Activated CD4-positive, alpha-beta memory T cell treated with anti-CD3 and anti-CD28 coated beads, Interleukin-2, amount 10 ng/mL, durations not matched to agents 7 days and 5 days (primary cell): ENCODE measurements at regions of chr2 and their contacts with region 1.

Region 1: DNA sequence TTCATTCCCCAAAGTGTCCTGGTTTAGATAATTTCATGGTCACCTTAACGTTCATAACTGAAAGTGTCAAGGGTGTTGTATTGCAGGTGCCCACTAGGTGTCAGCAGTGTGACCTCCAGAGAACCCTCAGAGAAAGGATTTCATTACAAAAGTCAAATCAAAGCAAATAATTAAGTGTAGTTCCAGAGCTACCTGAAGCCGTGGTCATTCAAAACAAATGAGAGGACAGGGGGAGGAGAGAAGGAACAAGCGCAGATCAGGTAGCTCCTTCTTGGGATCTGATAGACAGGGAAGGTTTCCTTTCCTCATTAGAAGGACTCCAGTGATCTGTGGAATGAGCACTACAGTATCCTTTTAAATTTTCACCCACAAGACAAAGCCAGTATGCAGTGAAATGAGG is at the start of gene SLC9A4:
- DNase-seq: peak; percentile 55
- H3K4me3 Mint-ChIP-seq: no peak within 1 kb of the TSS
- H3K27ac Mint-ChIP-seq: no peak within 1 kb of the TSS
- H3K4me1 Mint-ChIP-seq: peaks cover 2% of the 10 kb centered on the region
- H3K27me3 Mint-ChIP-seq: peaks cover 39% of the 10 kb centered on the region
- total RNA-seq, gene SLC9A4: 0.10 to 0.15 TPM

Region 2: DNA sequence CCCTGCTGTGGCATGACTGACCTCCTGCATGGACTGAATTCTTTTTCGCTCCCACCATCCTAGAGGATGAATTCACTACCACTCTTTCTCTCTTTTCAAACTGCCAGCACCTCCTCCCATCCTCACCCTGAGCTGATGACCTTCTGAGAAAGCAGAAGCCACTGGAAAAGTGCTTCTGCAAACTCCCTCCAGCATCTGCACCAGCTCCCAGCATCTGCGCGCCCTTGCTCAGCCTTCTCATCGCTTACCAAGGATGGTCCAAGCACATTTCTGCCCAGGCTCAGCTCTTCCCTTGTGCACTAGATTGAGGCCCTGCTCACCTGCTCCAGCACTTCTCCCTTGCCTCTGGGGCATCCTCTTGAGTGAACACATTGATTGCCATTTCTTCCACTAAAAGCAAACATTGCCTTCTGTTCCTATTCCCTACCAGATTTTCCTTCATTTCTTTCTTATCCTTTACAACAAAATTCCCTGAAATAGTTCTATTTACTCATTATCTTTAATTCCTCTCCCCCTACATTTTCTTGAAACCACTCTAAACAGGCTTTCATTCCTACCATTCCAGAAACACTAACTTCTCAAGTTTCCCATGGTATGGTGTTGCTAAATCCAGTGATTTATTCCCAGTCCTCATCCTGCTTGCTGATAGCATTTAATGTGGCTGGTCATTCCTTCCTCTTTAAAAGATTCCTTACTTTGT is 204.4 kb before region 1 on chr2:
- CTCF ChIA-PET with region 1: no interaction called
- POLR2A ChIA-PET with region 1: no interaction called
- DNase-seq: no peak
- H3K4me3 Mint-ChIP-seq: no peak overlapping the region
- H3K27ac Mint-ChIP-seq: no peak overlapping the region
- H3K4me1 Mint-ChIP-seq: peaks cover 26% of the 10 kb centered on the region
- H3K27me3 Mint-ChIP-seq: peaks cover 15% of the 10 kb centered on the region

Region 3: GRCh38 chr2:102615622-102616436 is 142.8 kb after region 1 on chr2:
- CTCF ChIA-PET with region 1: interaction called, 21 read pairs
- POLR2A ChIA-PET with region 1: no interaction called
- DNase-seq: peak; percentile 49
- H3K4me3 Mint-ChIP-seq: no peak overlapping the region
- H3K27ac Mint-ChIP-seq: no peak overlapping the region
- H3K4me1 Mint-ChIP-seq: peaks cover 14% of the 10 kb centered on the region
- H3K27me3 Mint-ChIP-seq: peaks cover 57% of the 10 kb centered on the region